Dorsolateral prefrontal cortex (tissue), 120 donors: ENCODE measurements at regions of chr1 and their contacts with region 1.

Region 1: GRCh38 chr1:154558575-154559465 is at the start of gene UBE2Q1:
- DNase-seq: peak; percentile 98 to 99 (median 99)
- H3K4me3 ChIP-seq: peak within 1 kb of the TSS; percentile 70 to 99 (median 92)
- H3K27ac ChIP-seq: peak within 1 kb of the TSS; percentile 85 to 98 (median 96)
- H3K27me3 ChIP-seq: no peaks in the 10 kb centered on the region
- CTCF ChIP-seq: no peak
- total RNA-seq, gene UBE2Q1: 55.7 to 144 (median 103) TPM

Region 2: DNA sequence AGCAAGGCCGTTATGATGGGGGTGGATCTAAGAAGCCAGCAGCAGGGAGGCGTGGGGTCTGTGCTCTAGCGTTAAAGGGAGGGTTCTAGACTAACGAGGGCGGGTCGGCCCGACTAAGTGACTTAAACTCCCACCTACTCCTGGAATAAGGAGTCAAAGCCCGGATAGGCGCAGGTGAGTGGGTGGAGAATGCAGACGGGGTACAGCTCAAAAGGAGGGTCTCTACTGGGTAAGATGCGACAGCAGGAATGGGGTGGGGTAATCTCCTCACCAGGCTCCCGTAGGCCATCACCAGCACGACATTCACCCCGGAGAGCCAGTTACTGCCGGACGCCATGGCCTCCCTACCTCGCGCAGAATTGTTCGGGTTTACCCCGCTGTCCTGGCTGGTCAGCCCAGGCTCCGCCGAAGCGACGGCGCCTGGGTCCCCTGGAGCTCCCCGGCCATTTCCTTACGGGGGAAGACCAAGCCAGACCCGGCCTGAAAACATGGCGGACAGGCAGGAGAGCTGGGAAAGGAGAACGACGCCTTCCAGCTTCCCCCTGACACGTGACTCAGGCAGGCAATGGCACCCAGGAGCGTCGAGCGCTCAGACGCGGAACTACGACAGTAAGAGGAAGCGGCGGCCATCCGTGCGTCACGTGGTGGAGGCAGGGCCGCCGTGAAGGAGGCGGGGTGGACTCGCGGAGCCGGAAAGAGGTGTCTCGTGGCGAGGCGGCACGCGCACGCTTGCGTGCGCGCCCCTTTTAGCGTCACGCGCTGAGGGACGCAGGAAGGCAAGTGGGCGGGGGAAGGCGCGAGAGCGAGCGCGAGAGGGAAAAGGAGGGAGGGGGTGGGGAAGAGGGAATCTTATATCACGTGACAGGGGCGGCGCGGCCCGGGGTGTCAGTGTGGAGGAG is 338.5 kb before region 1 on chr1 and contains the start of gene UBAP2L:
- intact Hi-C with region 1: loop called in 1 of 2 experiments (anchors 2 kb)
- DNase-seq: peak; percentile 96 to 99 (median 98)
- H3K4me3 ChIP-seq: peak within 1 kb of the TSS; percentile 71 to 100 (median 93)
- H3K27ac ChIP-seq: peak within 1 kb of the TSS; percentile 91 to 100 (median 99)
- H3K27me3 ChIP-seq: no peaks in the 10 kb centered on the region
- CTCF ChIP-seq: peak in 15 of 56 donors; percentile 6 to 52 (median 16)
- total RNA-seq, gene UBAP2L: 100 to 166 (median 130) TPM

Region 3: DNA sequence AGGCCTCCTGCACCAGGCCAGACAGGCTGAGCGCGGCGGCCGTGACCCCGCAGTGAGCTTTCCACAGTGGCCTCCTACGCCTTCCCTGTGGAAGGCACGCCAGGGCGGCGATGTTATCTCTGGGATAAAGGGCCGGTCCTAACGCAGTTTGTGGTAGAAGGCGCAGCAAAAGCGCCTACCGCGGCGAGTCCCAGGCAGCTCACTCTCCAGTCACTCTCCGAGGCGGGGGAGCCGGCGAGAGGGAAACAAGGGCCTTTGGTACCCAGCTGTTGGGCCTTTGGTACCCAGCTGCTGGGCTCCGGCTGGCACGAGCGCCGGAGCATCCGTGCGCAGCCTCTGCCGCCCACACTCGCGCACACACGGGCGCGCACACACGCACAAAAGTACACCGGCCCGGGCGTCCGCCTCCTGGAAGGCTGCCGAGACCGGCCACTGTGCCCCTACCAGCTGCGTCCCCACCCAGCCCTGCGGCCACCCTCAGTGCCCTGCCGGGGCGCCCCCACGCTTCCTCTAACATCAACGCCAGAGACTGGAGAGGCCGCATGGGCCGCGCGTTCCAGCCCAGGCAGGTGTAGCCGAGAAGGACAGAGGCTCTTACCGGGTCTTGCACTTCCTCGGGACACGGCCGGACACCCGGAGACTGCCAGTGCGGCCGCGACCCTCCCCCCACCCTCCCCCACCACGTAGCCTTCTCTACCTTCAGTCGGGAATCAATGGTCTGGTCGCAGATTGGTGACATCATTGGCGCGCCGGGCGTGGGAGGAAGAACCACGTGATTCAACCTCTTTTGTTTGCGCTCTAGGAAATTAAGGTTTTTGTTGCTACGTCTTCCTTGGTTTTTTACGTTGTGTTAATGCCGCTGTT is 68.7 kb after region 1 on chr1:
- intact Hi-C with region 1: loop called in 1 of 2 experiments (anchors 2 kb)
- DNase-seq: peak; percentile 77 to 92 (median 86)
- H3K4me3 ChIP-seq: peak overlapping the region; percentile 47 to 99 (median 95)
- H3K27ac ChIP-seq: peak overlapping the region; percentile 42 to 98 (median 91)
- H3K27me3 ChIP-seq: no peaks in the 10 kb centered on the region
- CTCF ChIP-seq: peak in 32 of 56 donors; percentile 3 to 55 (median 28)

Region 4: GRCh38 chr1:154760469-154760933 is 201.7 kb after region 1 on chr1:
- intact Hi-C with region 1: loop called in 1 of 2 experiments (anchors 10 kb)
- DNase-seq: peak in 2 of 10 donors; percentile 56 to 73
- H3K4me3 ChIP-seq: peak overlapping the region in 56 of 59 donors; percentile 3 to 64 (median 46)
- H3K27ac ChIP-seq: peak overlapping the region in 1 of 59 donors; percentile 52
- H3K27me3 ChIP-seq: peaks cover 0 to 7% (median 0%) of the 10 kb centered on the region in 45 donors
- CTCF ChIP-seq: peak in 54 of 56 donors; percentile 17 to 68 (median 53)

Region 5: DNA sequence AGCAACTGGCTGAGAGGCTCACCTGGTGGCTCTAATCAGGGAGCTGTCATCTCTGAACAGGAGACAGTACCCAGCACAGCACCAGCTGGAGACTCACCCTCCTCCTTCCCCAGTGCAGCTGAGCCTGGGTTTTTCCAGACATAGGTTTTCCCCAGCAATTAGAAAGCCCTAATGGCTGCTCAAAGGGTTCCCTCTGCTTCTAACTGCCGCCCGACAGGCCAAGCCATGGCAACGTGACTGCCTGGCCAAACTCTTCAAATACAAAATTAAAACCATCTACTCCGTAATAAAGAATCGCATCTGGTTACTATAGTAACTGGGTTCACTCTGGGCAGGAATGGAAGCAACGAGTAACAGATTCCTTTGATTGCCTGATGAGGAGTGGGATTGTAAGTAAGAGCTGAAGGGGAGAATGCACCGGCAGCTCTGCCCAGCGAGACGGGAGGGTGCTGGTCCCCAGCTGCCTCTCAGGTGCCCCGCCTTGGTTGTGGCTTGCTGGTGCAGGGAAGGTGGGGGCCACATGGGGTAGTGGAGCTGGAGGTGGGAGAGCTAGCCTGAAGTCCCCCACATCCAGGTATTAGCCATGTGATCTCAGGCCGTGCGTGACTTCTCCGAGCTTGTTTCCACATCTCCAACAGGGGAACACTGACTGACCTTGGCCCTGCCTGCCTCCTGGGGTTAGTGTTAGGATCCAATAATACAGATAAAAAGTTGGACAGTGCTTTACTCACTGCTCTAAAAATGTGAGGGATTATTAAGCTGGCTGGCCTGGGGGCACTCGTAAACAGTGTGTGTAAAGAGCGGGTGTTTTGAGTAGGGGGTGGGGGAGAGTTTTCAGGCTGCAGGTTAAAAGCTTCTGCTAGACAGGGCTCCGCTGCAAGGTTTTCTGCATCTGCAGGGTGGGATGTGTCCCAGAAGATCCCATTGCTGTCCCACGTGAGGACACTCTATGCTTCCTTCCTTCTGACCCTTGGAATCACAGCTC is 217.1 kb after region 1 on chr1:
- intact Hi-C with region 1: no loop called
- DNase-seq: no peak
- H3K4me3 ChIP-seq: no peak overlapping the region
- H3K27ac ChIP-seq: peak overlapping the region in 33 of 59 donors; percentile 6 to 76 (median 46)
- H3K27me3 ChIP-seq: no peaks in the 10 kb centered on the region
- CTCF ChIP-seq: no peak

Region 6: GRCh38 chr1:154936555-154937084 is 377.8 kb after region 1 on chr1 and contains the start of gene PMVK:
- intact Hi-C with region 1: loop called (anchors 2 kb)
- DNase-seq: peak; percentile 92 to 97 (median 96)
- H3K4me3 ChIP-seq: peak within 1 kb of the TSS; percentile 57 to 100 (median 83)
- H3K27ac ChIP-seq: peak within 1 kb of the TSS; percentile 74 to 100 (median 99)
- H3K27me3 ChIP-seq: no peaks in the 10 kb centered on the region
- CTCF ChIP-seq: peak in 53 of 56 donors; percentile 25 to 73 (median 53)
- total RNA-seq, gene PMVK: 28.0 to 64.2 (median 44.6) TPM

Region 7: GRCh38 chr1:155167166-155168104 is 608.6 kb after region 1 on chr1:
- intact Hi-C with region 1: loop called in 1 of 2 experiments (anchors 10 kb)
- DNase-seq: peak; percentile 90 to 94 (median 92)
- H3K4me3 ChIP-seq: peak overlapping the region; percentile 16 to 71 (median 53)
- H3K27ac ChIP-seq: peak overlapping the region; percentile 34 to 95 (median 88)
- H3K27me3 ChIP-seq: no peaks in the 10 kb centered on the region
- CTCF ChIP-seq: peak; percentile 80 to 98 (median 87)